Activated CD4-positive, alpha-beta memory T cell treated with anti-CD3 and anti-CD28 coated beads for 36 hours (primary cell): ENCODE measurements at regions of chr11 and their contacts with region 1.

Region 1: DNA sequence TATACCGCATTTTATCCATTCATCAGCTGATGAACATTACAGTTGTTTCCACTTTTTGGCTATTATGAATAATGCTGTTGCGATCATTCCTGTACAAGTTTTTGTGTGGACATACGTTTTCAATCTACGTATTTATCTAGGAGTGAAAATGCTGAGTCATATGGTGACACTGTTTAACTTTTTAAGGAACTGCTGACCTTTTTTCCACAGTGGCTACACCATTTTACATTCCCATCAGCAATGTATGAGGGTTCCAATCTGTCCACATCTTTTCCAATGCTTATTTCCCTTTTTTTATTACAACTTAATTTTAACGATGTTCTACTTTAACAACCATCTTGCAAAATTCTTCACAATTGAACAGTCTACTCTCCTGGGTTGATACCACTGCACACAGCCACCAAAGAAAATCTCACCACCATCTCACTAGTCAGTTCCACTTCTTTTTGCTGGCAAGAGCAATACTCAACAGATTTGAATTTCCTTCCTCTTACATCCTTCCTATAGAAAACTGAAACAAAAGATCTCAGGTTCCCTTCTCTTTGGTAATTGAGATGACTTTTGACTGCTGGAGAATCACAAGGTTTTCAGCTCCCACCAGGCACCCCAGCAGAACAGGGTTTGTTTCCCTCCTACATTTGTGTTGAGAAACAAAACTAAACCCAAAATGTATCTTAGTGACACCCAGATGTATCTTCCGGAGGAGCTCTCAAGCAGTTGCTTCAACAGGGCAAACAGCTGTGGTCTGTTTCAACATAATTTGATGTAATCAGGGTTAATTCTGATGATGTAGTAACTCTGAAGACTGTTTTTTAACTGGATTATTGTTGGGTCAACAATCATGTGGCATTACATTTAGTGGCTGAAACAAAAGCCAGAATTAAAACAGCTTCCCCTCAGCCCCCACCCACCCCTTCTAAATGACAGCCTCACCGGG is 7.0 kb upstream of the GAB2 start:
- DNase-seq: no peak
- H3K4me3 Mint-ChIP-seq: no peak overlapping the region
- H3K27ac Mint-ChIP-seq: peak overlapping the region; percentile 43
- H3K4me1 Mint-ChIP-seq: peaks cover 51% of the 10 kb centered on the region
- H3K27me3 Mint-ChIP-seq: peaks cover 7% of the 10 kb centered on the region

Region 2: DNA sequence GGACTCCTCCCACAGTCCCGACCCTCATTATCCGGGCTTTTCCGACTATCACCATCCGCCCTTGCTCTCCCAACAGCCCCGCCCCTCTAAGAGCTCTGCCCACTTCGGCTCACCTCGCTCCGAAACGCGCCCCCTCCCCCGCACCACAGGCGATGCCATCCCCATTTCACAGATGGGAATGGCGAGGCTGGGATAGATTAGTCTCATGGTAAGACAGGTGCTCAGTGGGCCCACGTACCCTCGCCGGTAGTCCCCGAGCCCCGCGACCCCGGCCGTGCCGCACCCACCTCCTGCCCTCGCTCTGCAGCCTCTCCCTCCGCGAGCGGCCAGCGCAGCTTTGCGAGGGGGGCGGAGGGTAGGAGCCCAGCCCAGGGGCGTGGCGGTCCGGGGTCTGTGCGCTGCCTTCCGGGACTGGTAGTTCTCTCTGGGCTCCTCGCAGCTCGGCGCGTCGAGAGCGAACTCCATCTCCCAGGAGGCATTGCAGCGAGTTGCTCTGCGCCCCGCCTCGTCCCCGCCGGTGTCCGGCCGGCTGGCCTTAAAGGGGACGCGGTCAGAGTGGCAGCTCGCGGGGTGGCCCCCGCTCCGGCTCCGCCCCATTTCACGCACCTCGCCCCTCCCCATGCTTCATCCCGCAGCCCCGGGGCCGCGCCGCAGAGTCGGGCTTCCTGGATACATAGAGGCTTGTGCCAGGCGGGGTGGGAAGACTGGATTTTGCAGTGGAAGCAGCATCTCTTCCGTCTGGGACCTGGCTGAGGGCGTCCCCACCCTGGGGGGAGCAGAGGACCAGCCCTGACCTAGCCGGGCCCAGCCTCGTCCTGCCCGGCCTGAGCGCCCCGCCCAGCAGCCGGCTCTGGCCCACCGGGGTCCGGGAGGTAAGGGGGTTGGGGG is 236.1 kb before region 1 on chr11 and contains the starts of genes KCTD21 and USP35:
- CTCF ChIA-PET with region 1: no interaction called
- POLR2A ChIA-PET with region 1: no interaction called
- intact Hi-C with region 1: no loop called
- DNase-seq: peak; percentile 95
- H3K4me3 Mint-ChIP-seq: peak within 1 kb of the TSS; percentile 98
- H3K27ac Mint-ChIP-seq: peak within 1 kb of the TSS; percentile 98
- H3K4me1 Mint-ChIP-seq: peaks cover 57% of the 10 kb centered on the region
- H3K27me3 Mint-ChIP-seq: no peaks in the 10 kb centered on the region
- total RNA-seq, gene KCTD21: 7.9 to 8.8 TPM
- total RNA-seq, gene USP35: 9.3 to 9.6 TPM

Region 3: DNA sequence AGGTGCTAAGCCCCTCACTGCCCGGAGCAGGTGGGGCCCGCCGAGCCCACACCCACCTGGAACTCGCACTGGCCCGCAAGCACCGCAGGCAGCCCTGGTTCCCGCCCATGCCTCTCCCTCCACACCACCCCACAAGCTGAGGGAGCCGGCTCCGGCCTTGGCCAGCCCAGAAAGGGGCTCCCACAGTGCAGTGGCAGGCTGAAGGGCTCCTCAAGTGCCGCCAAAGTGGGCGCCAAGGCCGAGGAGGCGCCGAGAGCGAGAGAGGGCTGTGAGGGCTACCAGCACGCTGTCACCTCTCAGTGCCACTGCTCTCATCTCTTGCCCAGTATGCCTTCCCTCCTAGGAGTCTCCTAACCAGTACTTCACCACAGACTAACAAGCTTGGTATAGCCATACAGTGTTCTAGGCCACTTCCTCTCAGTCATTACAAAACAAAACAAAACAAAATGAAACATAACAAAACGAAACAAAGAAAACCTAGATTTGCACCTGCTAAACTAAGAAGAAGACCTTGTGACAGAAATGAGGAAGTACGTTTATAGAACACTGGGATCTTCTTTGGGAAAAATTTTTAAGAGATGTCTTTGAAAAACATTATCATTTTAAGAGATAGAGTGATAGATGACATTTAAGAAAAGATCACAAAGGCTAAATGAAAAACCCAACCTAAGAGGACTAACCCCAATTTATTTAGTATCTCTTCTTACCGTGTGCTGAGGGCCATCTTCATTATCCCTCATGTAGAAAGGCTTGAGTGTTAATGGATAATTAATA is 40.8 kb after region 1 on chr11:
- CTCF ChIA-PET with region 1: interaction called, 3 read pairs
- POLR2A ChIA-PET with region 1: no interaction called
- intact Hi-C with region 1: loop called (anchors 2 kb)
- DNase-seq: peak; percentile 70
- H3K4me3 Mint-ChIP-seq: peak overlapping the region; percentile 35
- H3K27ac Mint-ChIP-seq: peak overlapping the region; percentile 75
- H3K4me1 Mint-ChIP-seq: peaks cover 21% of the 10 kb centered on the region
- H3K27me3 Mint-ChIP-seq: no peaks in the 10 kb centered on the region

Region 4: GRCh38 chr11:78886616-78887015 is 462.0 kb after region 1 on chr11:
- CTCF ChIA-PET with region 1: no interaction called
- POLR2A ChIA-PET with region 1: no interaction called
- intact Hi-C with region 1: no loop called
- DNase-seq: no peak
- H3K4me3 Mint-ChIP-seq: no peak overlapping the region
- H3K27ac Mint-ChIP-seq: no peak overlapping the region
- H3K4me1 Mint-ChIP-seq: no peaks in the 10 kb centered on the region
- H3K27me3 Mint-ChIP-seq: peaks cover 3% of the 10 kb centered on the region